ENCODE measurements at regions of chr3 and their contacts with region 1.

Region 1: DNA sequence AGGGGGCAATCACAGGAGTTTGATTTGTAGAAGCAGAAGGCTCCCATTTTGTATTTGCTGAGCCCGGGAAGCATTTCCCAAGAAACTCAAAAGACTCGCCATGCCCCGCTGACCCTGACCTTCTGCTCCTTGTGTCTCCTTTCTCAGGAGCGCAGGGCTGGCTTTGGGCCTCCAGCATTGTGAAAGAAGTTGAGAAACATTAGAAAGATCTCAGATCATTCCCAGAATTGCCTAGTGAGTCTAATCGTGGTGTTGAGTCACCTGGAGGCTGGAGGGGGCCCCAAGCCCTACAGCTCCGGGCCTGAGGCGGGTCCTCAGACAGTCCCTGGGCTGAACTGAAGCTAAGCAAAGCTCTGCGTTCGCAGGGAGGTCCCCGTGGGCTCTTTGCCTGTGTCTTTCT is 10.9 kb upstream of the PIGZ start:
- DNase-seq: no peak
- H3K4me3 ChIP-seq: no peak overlapping the region
- H3K27ac ChIP-seq: no peak overlapping the region
- H3K4me1 ChIP-seq: peaks cover 4% of the 10 kb centered on the region
- CTCF ChIP-seq: no peak

Region 2: GRCh38 chr3:197029511-197030167 is 50.1 kb after region 1 on chr3 and contains the start of gene MELTF:
- CTCF ChIA-PET with region 1: interaction called, 4 read pairs
- POLR2A ChIA-PET with region 1: no interaction called
- intact Hi-C with region 1: loop called (anchors 1 kb)
- DNase-seq: peak; percentile 83
- H3K4me3 ChIP-seq: peak within 1 kb of the TSS; percentile 74
- H3K27ac ChIP-seq: no peak within 1 kb of the TSS
- H3K4me1 ChIP-seq: peaks cover 14% of the 10 kb centered on the region
- CTCF ChIP-seq: peak; percentile 89
- total RNA-seq, gene MELTF: 7.4 and 9.6 TPM in 2 replicates

Region 3: GRCh38 chr3:197186887-197187588 is 207.5 kb after region 1 on chr3:
- CTCF ChIA-PET with region 1: no interaction called
- POLR2A ChIA-PET with region 1: no interaction called
- intact Hi-C with region 1: loop called (anchors 2 kb)
- DNase-seq: peak; percentile 75
- H3K4me3 ChIP-seq: no peak overlapping the region
- H3K27ac ChIP-seq: no peak overlapping the region
- H3K4me1 ChIP-seq: peaks cover 15% of the 10 kb centered on the region
- CTCF ChIP-seq: peak; percentile 99

Measured in OCI-LY7 (cell line).